ENCODE measurements at regions of chr20 and their contacts with region 1.

Region 1: DNA sequence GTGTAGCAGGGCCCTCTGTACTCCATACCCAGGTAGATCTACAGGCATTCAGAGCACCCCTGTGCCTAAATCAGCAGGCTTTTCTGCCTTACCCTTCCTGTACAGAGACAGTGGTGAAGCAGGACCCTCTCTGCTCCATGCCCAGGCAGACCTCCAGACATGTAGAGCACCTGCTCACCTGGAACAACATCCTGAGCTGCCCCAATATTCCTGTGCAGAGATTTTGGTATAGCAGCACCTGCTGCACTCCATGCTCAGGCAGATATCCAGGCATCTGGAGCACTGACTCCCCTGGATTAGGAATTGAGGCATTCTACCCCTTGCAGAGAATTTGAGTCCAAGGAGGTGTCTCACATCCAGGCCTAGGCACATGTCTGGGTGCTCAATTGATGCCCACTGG is 12.6 kb upstream of the CST1 start:
- DNase-seq: no peak
- ATAC-seq: no peak

Region 2: DNA sequence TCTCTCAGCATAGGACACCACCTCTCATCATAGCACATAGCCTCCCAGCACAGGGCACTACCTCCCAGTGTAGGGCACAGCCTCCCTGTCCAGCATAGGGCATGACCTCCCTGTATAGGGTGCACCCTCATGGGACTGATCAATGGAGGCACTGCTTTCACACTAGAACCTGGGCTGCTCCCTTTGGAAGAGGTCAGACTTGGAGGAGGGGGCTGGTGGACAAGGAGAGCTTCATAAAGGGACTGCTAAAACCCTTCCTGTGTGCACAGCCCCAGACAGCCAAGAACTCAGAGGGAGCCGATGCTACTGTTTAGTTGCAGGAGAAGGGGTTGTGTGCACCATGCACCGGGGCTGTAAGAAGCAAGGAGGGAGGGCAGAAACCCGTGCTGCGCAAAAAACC is 52.6 kb before region 1 on chr20:
- intact Hi-C with region 1: loop called in 1 of 2 experiments (anchors 5 kb)
- DNase-seq: no peak
- ATAC-seq: no peak

Region 3: GRCh38 chr20:23826541-23827021 is 63.2 kb after region 1 on chr20 and contains the start of gene CST2:
- intact Hi-C with region 1: no loop called
- DNase-seq: no peak
- ATAC-seq: no peak
- total RNA-seq, gene CST2: not detected

Measured in left cardiac atrium (tissue), 4 donors.